A549 (cell line): ENCODE measurements at regions of chr17 and their contacts with region 1.

Region 1: DNA sequence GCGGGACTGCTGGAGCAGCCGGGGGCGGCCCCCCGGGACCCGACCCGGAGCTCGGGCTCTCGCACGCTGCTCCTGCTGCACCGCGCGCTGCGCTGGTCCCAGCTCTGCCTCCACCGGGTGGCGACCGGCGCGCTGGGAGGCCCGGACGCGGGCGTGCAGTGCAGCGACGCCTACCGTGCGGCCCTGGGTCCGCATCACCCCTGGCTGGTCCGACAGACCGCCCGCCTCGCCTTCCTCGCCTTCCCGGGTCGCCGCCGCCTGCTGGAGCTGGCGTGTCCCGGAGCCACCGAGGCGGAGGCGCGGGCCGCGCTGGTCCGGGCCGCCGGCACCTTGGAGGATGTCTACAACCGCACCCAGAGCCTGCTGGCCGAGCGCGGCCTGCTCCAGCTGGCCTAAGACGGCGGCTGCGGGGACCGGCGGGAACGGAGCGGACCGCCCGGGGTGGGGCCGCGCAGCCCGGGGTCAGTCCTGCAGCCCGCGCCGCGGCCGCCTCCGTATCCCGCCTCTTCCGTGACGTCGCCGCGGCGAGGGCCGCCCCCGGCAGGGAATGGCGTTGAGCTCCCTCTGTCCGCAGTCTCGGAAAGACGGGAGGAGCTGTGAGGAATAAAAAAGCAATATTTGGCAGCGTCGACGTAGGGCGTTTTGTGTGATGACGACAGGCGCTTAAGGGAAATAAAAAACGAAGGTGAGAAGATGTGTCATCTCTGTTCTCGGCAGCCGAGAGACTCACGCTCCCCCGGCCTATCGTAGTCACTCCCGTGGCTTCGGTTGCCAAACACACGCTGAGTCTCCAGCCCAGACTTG is 1.3 kb downstream of the GLTPD2 start:
- DNase-seq: peak; percentile 94 to 99
- ATAC-seq: peak; percentile 89 to 92
- H3K4me3 ChIP-seq: peak overlapping the region; percentile 62
- H3K27ac ChIP-seq: peak overlapping the region; percentile 91 to 98
- H3K4me1 ChIP-seq: peaks cover 27% of the 10 kb centered on the region
- CTCF ChIP-seq: peak; percentile 95
- EP300 ChIP-seq: no peak; a peak in 1 of 5 replicates
- POLR2A ChIP-seq: peak; percentile 90
- RAD21 ChIP-seq: peak; percentile 43 to 75; a peak in 4 of 5 replicates

Region 2: DNA sequence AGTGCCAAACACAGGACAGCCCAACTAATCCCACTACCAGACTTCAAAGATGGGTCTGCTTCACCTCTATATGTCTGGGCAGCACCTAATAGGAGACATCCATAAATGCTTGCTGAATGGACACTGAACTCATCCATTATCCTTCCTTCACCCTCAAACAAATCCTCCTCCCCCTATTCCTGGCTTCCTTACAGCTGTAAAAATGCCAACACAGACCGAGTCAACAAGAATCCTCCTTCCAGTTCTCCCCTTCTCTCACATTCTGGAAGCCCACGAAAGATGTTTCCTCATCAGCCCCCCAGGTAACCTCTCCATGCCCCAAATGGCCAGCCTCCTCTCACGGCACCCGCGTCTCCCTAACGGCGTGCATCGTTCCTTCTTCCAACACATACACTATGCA is 98.4 kb before region 1 on chr17:
- CTCF ChIA-PET with region 1: no interaction called
- POLR2A ChIA-PET with region 1: no interaction called
- DNase-seq: no peak
- ATAC-seq: no peak; a peak in 1 of 6 replicates
- H3K4me3 ChIP-seq: no peak overlapping the region
- H3K27ac ChIP-seq: no peak overlapping the region
- H3K4me1 ChIP-seq: peaks cover 5% of the 10 kb centered on the region; the same call in 2 of the 3 replicates
- CTCF ChIP-seq: no peak
- EP300 ChIP-seq: no peak
- POLR2A ChIP-seq: no peak
- RAD21 ChIP-seq: no peak

Region 3: GRCh38 chr17:4709794-4710692 is 80.1 kb before region 1 on chr17 and contains the start of gene ARRB2:
- CTCF ChIA-PET with region 1: interaction called, 108 read pairs
- POLR2A ChIA-PET with region 1: interaction called, 25 read pairs
- DNase-seq: peak; percentile 99 to 100
- ATAC-seq: peak; percentile 91
- H3K4me3 ChIP-seq: peak within 1 kb of the TSS; percentile 83
- H3K27ac ChIP-seq: peak within 1 kb of the TSS; percentile 94
- H3K4me1 ChIP-seq: peaks cover 27% of the 10 kb centered on the region
- CTCF ChIP-seq: peak; percentile 88
- EP300 ChIP-seq: no peak
- POLR2A ChIP-seq: peak; percentile 74
- RAD21 ChIP-seq: peak; percentile 91 to 94
- polyA plus RNA-seq, gene ARRB2: 73.1 and 74.9 TPM in 2 replicates

Region 4: DNA sequence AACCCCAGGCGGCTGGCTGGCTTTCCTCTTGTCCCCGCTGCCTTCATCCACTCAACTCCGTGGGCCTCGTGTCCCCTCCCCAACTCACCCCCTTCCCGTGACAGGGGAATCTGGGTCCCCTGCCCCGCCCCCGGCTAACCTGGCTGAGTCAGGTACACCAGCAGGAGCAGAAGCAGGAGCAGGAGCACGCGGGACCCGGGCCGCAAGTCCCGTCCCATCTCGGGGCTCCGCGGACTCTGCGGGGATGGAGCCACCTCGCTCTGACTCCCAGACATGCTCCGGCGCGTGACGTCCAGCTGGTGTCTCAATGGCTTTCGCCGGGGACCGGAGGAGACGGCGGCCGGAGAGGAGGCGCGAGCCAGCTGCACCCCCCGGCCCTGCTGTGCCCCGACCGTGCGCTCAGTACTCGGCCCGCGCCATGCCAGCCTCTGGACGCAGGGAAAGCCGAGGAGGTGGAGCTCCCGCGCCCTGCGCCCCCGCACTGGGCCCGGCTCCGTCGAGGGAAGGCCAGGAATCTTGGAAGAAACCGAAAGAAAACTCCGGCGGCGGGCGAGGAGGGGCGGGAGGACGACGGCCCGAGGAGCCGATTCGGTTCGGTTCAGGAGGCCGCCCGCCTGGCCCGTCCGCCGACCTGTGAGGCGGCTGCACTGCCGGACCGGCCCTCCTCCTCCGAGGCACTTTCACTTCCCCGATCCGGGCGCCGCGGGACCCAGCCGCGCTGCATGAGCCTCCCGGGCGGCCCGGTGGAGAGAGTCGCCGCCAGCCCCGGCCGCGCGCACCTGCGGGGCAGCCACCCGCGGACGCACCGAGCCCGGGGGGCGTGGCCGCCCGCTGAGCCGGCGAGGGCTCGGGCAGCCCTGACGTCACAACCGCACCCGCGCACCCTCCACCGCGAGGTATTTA is 50.7 kb before region 1 on chr17 and contains the starts of genes CXCL16 and ZMYND15:
- CTCF ChIA-PET with region 1: interaction called, 115 read pairs
- POLR2A ChIA-PET with region 1: interaction called, 6 read pairs
- DNase-seq: peak; percentile 39 to 85
- ATAC-seq: peak; percentile 63 to 76
- H3K4me3 ChIP-seq: peak within 1 kb of the TSS; percentile 86
- H3K27ac ChIP-seq: peak within 1 kb of the TSS; percentile 79 to 87
- H3K4me1 ChIP-seq: peaks cover 9% of the 10 kb centered on the region
- CTCF ChIP-seq: no peak
- EP300 ChIP-seq: no peak
- POLR2A ChIP-seq: peak; percentile 38
- RAD21 ChIP-seq: no peak; a peak in 1 of 5 replicates
- polyA plus RNA-seq, gene CXCL16: 13.8 and 20.5 TPM in 2 replicates
- polyA plus RNA-seq, gene ZMYND15: 0.15 and 0.16 TPM in 2 replicates

Region 5: GRCh38 chr17:4806777-4807604 is 16.9 kb after region 1 on chr17 and contains the start of gene PLD2:
- CTCF ChIA-PET with region 1: interaction called, 38 read pairs
- POLR2A ChIA-PET with region 1: interaction called, 24 read pairs
- DNase-seq: peak; percentile 81 to 98
- ATAC-seq: peak; percentile 97 to 98
- H3K4me3 ChIP-seq: peak within 1 kb of the TSS; percentile 83
- H3K27ac ChIP-seq: peak within 1 kb of the TSS; percentile 86 to 90
- H3K4me1 ChIP-seq: peaks cover 14% of the 10 kb centered on the region
- CTCF ChIP-seq: no peak
- EP300 ChIP-seq: no peak
- POLR2A ChIP-seq: peak; percentile 88
- RAD21 ChIP-seq: no peak
- polyA plus RNA-seq, gene PLD2: 17.0 and 20.2 TPM in 2 replicates

Region 6: DNA sequence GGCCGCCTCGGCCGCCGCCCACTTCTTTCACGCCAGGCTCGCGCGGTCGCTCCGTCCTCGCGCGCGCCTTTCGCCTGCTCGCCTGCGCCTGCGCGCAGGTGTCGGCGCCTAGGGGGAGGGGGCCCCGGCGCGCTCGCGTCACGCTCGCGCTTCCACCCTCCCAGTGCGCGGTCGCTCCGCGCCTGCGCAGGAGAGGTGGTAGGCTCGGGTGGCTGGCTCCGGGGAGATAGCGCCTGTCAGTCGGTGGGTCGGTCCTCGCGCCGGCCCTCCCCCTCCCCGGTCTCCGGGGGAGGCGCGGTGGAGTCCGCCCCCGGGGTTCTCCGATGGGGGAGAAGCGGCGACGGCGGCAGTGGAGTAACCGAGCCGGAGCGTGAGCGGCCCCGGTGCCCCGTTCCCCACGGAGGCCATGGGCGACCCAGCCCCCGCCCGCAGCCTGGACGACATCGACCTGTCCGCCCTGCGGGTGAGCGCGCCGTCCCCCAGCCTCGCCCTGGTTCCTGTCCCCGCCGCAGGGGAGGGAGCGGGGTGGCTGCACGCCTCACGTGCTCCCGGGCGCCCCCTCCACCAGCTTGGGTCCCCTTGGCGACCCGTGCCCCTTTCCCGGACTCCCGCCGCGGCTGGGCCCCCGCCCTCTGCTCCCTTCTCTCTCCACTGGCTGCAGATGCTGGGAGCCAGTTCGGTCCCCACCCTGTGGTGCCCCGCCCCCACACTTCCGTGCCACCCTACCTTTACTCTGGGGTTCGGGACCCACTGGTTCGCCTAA is 43.3 kb after region 1 on chr17 and contains the start of gene MINK1:
- CTCF ChIA-PET with region 1: interaction called, 27 read pairs
- POLR2A ChIA-PET with region 1: interaction called, 3 read pairs
- DNase-seq: peak; percentile 96 to 99
- ATAC-seq: peak; percentile 92 to 93
- H3K4me3 ChIP-seq: peak within 1 kb of the TSS; percentile 85
- H3K27ac ChIP-seq: peak within 1 kb of the TSS; percentile 91 to 95
- H3K4me1 ChIP-seq: peaks cover 21% of the 10 kb centered on the region
- CTCF ChIP-seq: no peak
- EP300 ChIP-seq: no peak
- POLR2A ChIP-seq: peak; percentile 47
- RAD21 ChIP-seq: no peak
- polyA plus RNA-seq, gene MINK1: 41.3 and 47.1 TPM in 2 replicates

Region 7: DNA sequence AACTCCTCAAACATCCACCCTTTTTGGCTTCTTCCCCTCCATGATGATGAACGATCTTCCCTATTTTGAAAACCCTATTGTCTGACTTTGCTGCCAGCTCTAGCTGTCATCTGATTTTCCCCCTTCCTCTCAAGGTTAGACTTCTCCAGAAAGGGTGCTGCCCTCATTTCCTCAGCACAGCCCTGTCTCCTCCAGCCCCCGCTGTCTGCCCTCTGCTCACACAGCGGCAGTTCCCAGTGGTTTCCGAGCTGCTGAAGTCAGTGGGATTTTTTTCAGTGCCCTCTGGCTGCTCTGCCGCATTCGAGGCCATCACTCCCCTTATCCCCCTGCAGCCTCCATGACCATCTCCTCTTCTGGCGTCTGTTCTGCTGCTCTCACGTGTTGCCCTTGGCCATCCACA is 82.7 kb after region 1 on chr17:
- CTCF ChIA-PET with region 1: interaction called, 24 read pairs
- POLR2A ChIA-PET with region 1: interaction called, 3 read pairs
- DNase-seq: no peak
- ATAC-seq: no peak
- H3K4me3 ChIP-seq: no peak overlapping the region
- H3K27ac ChIP-seq: no peak overlapping the region
- H3K4me1 ChIP-seq: no peaks in the 10 kb centered on the region
- CTCF ChIP-seq: no peak
- EP300 ChIP-seq: no peak
- POLR2A ChIP-seq: no peak
- RAD21 ChIP-seq: no peak